AG04449 (cell line): ENCODE measurements at regions of chr1 and their contacts with region 1.

Region 1: DNA sequence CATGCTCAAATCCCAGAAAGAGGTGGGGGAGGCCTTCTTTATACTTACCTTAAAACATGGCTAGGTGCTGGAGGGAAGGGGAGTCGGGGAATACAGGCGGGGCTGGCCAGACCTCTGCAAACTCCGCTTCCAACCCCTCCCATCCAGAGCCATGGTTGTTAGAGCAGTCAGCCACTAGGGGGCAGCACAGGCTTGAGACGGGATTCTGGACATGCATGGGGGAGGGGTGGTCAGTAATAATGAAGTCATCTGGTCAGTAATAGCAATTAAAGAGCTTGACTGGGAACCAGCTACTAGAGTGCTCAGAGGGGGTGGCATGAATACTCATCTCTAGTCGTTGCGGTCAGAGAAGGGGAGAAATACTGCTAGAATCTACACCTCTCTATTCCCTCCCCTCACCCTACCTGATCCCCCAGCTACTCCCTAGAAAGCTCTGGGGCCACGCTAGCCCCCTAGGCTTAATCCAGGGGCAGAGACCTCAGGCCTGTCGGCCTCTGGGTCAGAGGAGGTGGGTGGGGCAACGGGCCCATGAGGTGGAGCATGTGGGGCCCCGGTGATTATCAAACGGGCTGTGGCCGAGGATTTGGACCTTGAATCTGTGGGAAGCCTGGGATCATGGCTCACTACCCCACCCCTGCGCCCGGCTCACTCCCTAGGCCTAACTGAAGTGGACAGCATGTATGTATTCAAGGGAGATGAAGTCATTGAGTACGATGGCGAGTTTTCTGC is 2.9 kb downstream of the CASQ1 start:
- DNase-seq: peak; percentile 33
- H3K4me3 ChIP-seq: no peak overlapping the region
- CTCF ChIP-seq: peak; percentile 99

Region 2: DNA sequence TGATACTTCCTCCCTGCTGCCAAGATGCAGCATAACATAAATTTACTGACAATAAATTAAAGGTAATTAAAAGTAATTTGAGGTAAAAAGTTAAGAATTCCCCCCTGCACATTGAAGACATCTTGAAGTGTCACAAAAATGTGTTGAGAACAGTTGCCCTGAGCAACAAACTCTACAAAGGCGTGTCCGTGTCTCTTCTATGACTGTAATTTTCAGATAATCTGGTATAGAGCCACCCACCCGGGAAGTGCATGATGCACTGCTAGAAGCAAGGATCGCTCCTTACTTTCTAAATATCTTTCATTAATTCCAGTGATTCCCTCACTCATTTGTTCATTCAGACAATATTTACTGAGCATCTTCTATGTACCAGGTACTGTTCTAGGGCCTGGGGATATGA is 13.9 kb before region 1 on chr1:
- CTCF ChIA-PET with region 1: interaction called, 49 read pairs
- POLR2A ChIA-PET with region 1: no interaction called
- DNase-seq: no peak
- H3K4me3 ChIP-seq: no peak overlapping the region
- CTCF ChIP-seq: no peak

Region 3: DNA sequence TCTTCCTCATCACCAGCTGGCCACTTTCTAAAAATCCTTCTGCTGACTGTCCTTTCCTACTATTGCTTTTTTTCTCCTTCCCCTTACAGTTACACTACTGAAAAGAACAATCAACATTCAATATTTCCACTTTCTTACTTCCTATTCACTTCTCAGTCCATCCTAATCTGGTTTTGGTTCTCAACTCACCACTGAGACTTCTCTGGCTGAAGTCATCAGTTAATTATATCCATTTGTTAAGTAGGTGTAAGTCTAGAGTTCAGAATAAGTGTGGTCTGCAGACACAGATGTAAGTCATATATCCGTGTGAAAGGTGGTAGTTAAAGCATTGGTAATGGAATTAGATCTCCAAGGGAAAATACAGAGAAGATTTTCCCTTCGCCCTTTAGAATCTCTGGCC is 33.4 kb after region 1 on chr1:
- CTCF ChIA-PET with region 1: interaction called, 186 read pairs
- POLR2A ChIA-PET with region 1: no interaction called
- DNase-seq: no peak
- H3K4me3 ChIP-seq: no peak overlapping the region
- CTCF ChIP-seq: no peak

Region 4: DNA sequence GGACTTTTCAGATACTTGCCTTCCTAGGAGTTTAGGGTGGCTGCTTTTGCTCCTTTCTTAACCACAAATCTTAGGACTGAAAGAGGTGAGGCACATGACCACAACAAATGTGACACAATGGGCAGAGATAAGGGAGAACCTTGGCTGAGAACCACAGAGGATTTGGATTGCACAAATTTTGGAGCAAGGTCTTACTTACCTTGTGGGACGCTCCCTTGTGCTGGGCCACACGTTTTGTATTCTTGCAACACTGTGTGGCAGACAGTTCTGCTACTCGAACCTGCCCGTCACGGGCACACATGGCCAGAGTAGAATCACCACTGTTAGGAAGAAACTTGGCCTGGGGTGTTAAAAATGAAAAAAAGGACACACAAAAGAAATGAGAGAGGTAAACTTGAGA is 45.2 kb after region 1 on chr1:
- CTCF ChIA-PET with region 1: interaction called, 12 read pairs
- POLR2A ChIA-PET with region 1: no interaction called
- DNase-seq: no peak
- H3K4me3 ChIP-seq: no peak overlapping the region
- CTCF ChIP-seq: no peak

Region 5: GRCh38 chr1:160251687-160252526 is 58.7 kb after region 1 on chr1:
- CTCF ChIA-PET with region 1: interaction called, 125 read pairs
- POLR2A ChIA-PET with region 1: no interaction called
- DNase-seq: no peak
- H3K4me3 ChIP-seq: no peak overlapping the region
- CTCF ChIP-seq: peak; percentile 54

Region 6: GRCh38 chr1:160284782-160285344 is 91.6 kb after region 1 on chr1 and contains the start of gene PEX19:
- CTCF ChIA-PET with region 1: interaction called, 148 read pairs
- POLR2A ChIA-PET with region 1: no interaction called
- DNase-seq: no peak
- H3K4me3 ChIP-seq: peak within 1 kb of the TSS; percentile 81
- CTCF ChIP-seq: no peak

Region 7: GRCh38 chr1:160315359-160315758 is 122.1 kb after region 1 on chr1:
- CTCF ChIA-PET with region 1: no interaction called
- POLR2A ChIA-PET with region 1: no interaction called
- DNase-seq: no peak
- H3K4me3 ChIP-seq: no peak overlapping the region
- CTCF ChIP-seq: no peak

Region 8: GRCh38 chr1:160486453-160486852 is 293.2 kb after region 1 on chr1:
- CTCF ChIA-PET with region 1: no interaction called
- POLR2A ChIA-PET with region 1: no interaction called
- DNase-seq: no peak
- H3K4me3 ChIP-seq: no peak overlapping the region
- CTCF ChIP-seq: no peak